Calu3 (cell line): ENCODE measurements at regions of chr18 and their contacts with region 1.

Region 1: GRCh38 chr18:33987206-33987605 is 237.5 kb downstream of the NOL4 start:
- DNase-seq: no peak
- H3K4me3 Mint-ChIP-seq: no peak overlapping the region
- H3K27ac Mint-ChIP-seq: no peak overlapping the region
- H3K4me1 Mint-ChIP-seq: peaks cover 9% of the 10 kb centered on the region
- H3K27me3 Mint-ChIP-seq: no peaks in the 10 kb centered on the region
- CTCF ChIP-seq: no peak

Region 2: GRCh38 chr18:34707670-34708069 is 720.5 kb after region 1 on chr18:
- CTCF ChIA-PET with region 1: interaction called, 12 read pairs
- intact Hi-C with region 1: no loop called
- DNase-seq: peak; percentile 67
- H3K4me3 Mint-ChIP-seq: no peak overlapping the region
- H3K27ac Mint-ChIP-seq: peak overlapping the region; percentile 37
- H3K4me1 Mint-ChIP-seq: peaks cover 23% of the 10 kb centered on the region
- H3K27me3 Mint-ChIP-seq: no peaks in the 10 kb centered on the region
- CTCF ChIP-seq: no peak